Dorsolateral prefrontal cortex (tissue), 120 donors: ENCODE measurements at regions of chr1 and their contacts with region 1.

Region 1: GRCh38 chr1:36149237-36149972 is at the start of gene TRAPPC3:
- DNase-seq: peak; percentile 100
- H3K4me3 ChIP-seq: peak within 1 kb of the TSS; percentile 65 to 99 (median 93)
- H3K27ac ChIP-seq: peak within 1 kb of the TSS; percentile 60 to 100 (median 92)
- H3K27me3 ChIP-seq: no peaks in the 10 kb centered on the region
- CTCF ChIP-seq: peak in 55 of 56 donors; percentile 91 to 100 (median 98)
- total RNA-seq, gene TRAPPC3: 41.0 to 81.9 (median 61.8) TPM

Region 2: DNA sequence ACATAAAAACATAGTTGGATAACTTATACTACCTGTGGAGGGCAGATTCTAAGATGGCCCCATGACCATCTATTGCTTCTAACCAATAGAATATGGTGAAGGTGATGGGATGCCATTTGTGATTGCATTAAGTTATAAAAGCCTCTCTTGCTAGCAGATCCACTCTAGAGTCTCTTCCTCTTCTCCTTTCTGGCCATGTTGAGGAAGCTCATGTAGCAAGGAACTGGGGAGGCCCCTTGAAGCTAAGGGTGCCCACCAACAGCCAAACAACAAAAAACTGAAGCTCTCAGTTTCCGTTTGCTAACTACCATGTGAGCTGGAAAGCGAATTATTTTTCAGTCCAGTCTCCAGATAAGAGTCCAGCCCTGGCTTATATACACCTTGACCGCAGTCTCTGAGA is 282.4 kb before region 1 on chr1:
- intact Hi-C with region 1: no loop called
- DNase-seq: no peak
- H3K4me3 ChIP-seq: no peak overlapping the region
- H3K27ac ChIP-seq: no peak overlapping the region
- H3K27me3 ChIP-seq: no peaks in the 10 kb centered on the region
- CTCF ChIP-seq: no peak

Region 3: GRCh38 chr1:36217670-36218069 is 68.3 kb after region 1 on chr1:
- intact Hi-C with region 1: loop called (anchors 2 kb)
- DNase-seq: peak in 3 of 10 donors; percentile 41 to 52 (median 41)
- H3K4me3 ChIP-seq: no peak overlapping the region
- H3K27ac ChIP-seq: peak overlapping the region in 37 of 59 donors; percentile 9 to 79 (median 55)
- H3K27me3 ChIP-seq: no peaks in the 10 kb centered on the region
- CTCF ChIP-seq: peak in 52 of 56 donors; percentile 23 to 76 (median 54)

Region 4: DNA sequence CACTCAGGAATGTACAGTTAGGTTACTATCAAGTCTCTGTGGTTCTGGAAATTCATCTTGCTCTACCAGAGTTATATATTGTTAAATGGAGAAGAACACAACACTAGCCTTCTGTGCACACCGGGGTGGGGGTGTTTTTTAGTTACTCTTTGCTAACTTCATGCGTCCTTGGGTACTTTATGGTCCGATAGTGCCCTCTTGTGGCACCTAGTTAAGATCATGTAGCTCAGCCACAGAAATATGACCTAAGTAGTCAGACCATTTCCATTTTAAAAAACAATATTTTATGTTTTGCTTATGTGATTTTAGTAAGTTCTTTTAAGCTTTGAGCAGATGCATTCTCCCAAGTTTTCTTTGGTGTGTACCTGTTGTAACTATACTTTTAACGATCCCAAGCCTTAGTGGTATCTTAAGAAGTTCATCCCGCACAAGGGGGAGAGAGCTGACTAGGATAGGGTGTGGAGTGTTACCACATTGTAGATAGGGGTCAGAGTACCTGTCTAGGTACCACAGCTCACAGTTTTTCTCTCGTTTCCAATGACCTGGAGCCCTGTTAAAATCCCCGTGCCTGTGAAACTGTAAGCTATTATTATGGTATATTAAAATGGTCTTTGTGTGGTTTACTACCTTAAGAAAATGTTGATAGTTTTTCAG is 136.2 kb after region 1 on chr1:
- intact Hi-C with region 1: loop called (anchors 1 to 2 kb)
- DNase-seq: peak in 5 of 10 donors; percentile 41 to 84 (median 64)
- H3K4me3 ChIP-seq: no peak overlapping the region
- H3K27ac ChIP-seq: peak overlapping the region in 30 of 59 donors; percentile 0 to 56 (median 22)
- H3K27me3 ChIP-seq: no peaks in the 10 kb centered on the region
- CTCF ChIP-seq: peak; percentile 61 to 89 (median 79)

Region 5: GRCh38 chr1:36385410-36386257 is 236.2 kb after region 1 on chr1 and contains the start of gene STK40:
- intact Hi-C with region 1: loop called (anchors 10 kb)
- DNase-seq: peak; percentile 95 to 99 (median 98)
- H3K4me3 ChIP-seq: peak within 1 kb of the TSS; percentile 80 to 100 (median 95)
- H3K27ac ChIP-seq: peak within 1 kb of the TSS; percentile 70 to 99 (median 96)
- H3K27me3 ChIP-seq: no peaks in the 10 kb centered on the region
- CTCF ChIP-seq: peak in 16 of 56 donors; percentile 6 to 47 (median 14)
- total RNA-seq, gene STK40: 17.4 to 52.5 (median 29.0) TPM

Region 6: DNA sequence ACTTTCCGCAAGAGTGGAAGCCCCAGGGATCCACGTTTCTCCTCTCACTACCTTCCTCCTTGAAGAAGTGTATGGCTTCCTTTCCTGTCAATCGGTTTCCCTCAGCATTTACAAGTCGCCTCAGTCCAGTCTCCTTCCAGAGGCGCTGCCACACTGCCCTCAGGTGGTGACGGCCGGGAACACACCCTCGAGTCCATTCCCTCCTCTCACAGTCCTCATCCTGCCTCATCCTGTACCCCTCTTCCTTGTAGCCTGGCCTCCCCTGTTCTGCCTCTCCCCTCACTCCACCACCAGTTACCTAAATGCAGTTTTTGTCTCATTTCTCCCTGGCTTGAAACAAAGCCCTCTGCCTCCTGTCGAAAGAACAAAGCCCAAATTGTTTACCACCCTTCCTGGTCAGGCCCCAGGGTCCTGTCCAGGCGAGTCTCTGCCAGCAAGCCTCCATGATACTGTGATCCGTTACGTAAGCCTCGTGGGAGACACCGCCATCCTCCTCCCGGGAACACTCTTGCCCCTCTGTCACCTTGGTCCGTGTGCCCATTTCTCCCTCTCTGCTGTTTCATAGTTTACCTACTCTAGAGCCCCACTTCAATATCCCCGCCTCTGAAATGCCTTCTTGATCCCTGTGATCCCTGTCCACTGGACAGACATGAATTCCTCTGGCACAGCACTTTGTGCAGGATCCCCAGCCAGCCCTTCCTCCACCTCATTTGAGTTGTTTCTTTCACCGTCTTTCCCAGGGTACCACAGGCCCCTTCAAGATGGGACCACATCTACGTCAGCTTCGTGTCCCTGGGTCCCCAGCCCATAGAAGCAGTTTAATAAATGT is 271.6 kb after region 1 on chr1:
- intact Hi-C with region 1: loop called in 1 of 2 experiments (anchors 2 kb)
- DNase-seq: peak; percentile 78 to 94 (median 88)
- H3K4me3 ChIP-seq: no peak overlapping the region
- H3K27ac ChIP-seq: peak overlapping the region in 29 of 59 donors; percentile 3 to 66 (median 44)
- H3K27me3 ChIP-seq: no peaks in the 10 kb centered on the region
- CTCF ChIP-seq: peak; percentile 70 to 97 (median 94)